Activated CD8-positive, alpha-beta T cell treated with anti-CD3 and anti-CD28 coated beads for 36 hours (primary cell): ENCODE measurements at regions of chr7 and their contacts with region 1.

Region 1: DNA sequence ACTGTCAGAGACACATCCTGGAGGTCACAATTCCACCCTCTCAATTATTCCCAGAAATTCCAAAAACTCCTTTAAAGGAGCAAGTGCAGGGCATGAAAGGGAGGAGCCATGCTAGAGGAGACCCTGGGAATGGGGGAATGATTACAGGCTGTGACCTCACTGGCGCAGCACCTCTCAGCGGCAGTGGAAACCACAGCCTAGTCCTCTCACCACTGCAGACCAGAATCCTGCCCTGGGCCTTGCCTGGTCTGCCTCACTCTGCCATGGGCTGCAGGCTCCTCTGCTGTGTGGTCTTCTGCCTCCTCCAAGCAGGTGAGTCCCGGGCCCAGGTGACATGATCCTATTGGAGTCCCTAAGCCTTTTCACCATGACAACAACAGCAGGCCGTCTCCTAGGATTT is 50.5 kb upstream of the PRSS58 start:
- DNase-seq: no peak
- ATAC-seq: no peak
- H3K4me3 Mint-ChIP-seq: peak overlapping the region; percentile 49
- H3K27ac Mint-ChIP-seq: peak overlapping the region; percentile 45
- H3K4me1 Mint-ChIP-seq: peaks cover 11% of the 10 kb centered on the region
- H3K27me3 Mint-ChIP-seq: no peaks in the 10 kb centered on the region
- CTCF ChIP-seq: no peak

Region 2: GRCh38 chr7:142338633-142339501 is 30.5 kb after region 1 on chr7:
- CTCF ChIA-PET with region 1: interaction called, 25 read pairs
- POLR2A ChIA-PET with region 1: no interaction called
- intact Hi-C with region 1: loop called (anchors 1 kb)
- DNase-seq: peak; percentile 53
- ATAC-seq: peak; percentile 47
- H3K4me3 Mint-ChIP-seq: no peak overlapping the region
- H3K27ac Mint-ChIP-seq: peak overlapping the region; percentile 26
- H3K4me1 Mint-ChIP-seq: peaks cover 23% of the 10 kb centered on the region
- H3K27me3 Mint-ChIP-seq: peaks cover 2% of the 10 kb centered on the region
- CTCF ChIP-seq: no peak